Mucosa of descending colon (tissue), 3 donors: ENCODE measurements at regions of chr1 and their contacts with region 1.

Region 1: DNA sequence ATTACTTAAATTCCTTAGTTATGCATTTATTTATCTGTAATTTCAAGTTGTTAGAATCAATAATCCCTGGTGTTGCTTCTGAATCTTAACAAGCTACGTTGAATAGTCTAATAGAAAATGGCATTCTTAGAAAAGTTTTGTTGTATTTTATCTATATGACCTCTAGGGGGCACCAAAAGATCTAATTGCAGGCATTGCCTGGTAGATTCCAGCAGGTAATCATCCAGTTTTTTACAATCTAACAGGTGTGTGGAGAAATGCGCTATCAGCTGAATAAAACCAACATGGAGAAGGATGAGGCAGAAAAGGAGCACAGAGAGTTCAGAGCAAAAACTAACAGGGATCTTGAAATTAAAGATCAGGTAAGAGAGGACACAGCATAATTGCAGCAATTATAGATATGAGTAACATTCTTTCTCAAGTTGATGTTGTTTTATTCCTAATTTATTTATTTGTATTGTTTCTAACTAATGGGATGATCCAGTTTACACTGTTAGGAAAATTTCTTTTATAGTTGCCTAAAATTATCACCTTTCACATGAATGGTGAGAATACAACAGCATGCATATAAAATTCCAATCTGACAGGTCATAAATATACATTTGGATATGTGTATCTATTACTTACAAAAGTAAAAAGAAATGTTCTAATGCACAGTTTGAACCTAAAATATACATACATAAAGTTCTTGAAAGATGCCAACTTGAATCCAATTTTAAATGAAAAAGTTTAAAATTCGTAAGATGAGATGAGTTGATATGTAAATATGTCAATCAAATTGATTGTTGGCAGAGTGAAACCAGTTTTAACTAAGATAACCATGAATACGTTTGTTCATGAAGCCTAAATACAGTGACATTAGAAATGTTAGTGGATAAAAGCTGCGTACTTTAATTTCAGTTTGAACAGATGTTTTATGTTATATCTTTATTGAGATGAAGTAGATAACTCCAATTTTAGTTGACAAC is 88.4 kb downstream of the SDCCAG8 start:
- DNase-seq: peak in 1 of 3 donors; percentile 7
- ATAC-seq: peak; percentile 88
- H3K4me3 ChIP-seq: no peak overlapping the region
- H3K4me1 ChIP-seq: no peaks in the 10 kb centered on the region
- CTCF ChIP-seq: no peak

Region 2: DNA sequence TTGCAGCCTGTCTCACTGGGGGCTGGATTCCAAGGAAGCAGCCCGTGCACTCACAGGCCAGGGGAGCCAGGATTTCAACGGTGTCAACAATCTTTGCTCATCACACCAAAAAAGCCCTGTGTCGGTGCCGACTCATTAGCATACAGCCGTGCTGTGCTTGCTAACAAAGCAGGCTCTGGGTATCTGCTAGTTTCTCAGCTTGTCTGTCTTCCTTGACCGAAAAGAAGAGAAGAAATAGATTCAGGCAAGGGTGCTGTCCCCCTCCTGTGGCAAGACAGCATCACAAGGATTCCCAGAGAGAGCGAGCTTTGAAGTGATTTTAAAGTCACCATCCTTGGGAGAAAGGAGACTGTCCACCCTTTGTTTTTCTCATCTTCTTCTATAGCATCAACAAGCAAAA is 126.2 kb after region 1 on chr1:
- intact Hi-C with region 1: no loop called
- DNase-seq: no peak
- ATAC-seq: no peak
- H3K4me3 ChIP-seq: no peak overlapping the region
- H3K4me1 ChIP-seq: no peaks in the 10 kb centered on the region
- CTCF ChIP-seq: no peak

Region 3: GRCh38 chr1:243482141-243483022 is 138.1 kb after region 1 on chr1:
- intact Hi-C with region 1: no loop called
- DNase-seq: no peak
- ATAC-seq: peak; percentile 18
- H3K4me3 ChIP-seq: no peak overlapping the region
- H3K4me1 ChIP-seq: no peaks in the 10 kb centered on the region
- CTCF ChIP-seq: no peak

Region 4: DNA sequence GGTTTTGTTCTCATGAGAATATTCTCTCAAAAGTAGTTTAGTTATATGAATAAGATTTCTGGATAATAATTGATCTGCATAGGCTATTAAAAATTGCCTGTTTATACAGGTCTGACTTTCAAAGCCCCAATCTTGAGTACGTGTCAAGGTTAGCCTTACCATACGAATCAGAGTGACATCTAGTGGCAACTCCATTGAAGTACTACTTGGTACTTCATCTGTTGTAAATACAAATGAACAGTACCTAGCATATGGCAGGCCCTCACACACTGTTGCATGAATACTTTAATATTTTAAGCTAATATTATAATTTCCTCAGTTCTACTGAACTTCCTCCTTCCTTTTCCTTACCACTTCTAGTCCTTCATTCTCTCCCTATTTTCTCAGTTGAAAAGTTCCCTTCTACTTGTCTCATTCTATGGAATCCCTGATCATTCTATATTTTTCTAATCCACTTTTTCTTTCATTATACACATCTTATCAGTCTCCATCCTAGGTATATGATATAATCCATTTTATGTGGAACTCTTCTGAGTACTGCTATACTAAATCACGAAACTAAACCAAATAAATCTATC is 404.5 kb after region 1 on chr1:
- intact Hi-C with region 1: loop called in 1 of 2 experiments (anchors 10 kb)
- DNase-seq: peak in 1 of 3 donors; percentile 46
- ATAC-seq: peak; percentile 88
- H3K4me3 ChIP-seq: no peak overlapping the region
- H3K4me1 ChIP-seq: no peaks in the 10 kb centered on the region
- CTCF ChIP-seq: peak; percentile 23

Region 5: DNA sequence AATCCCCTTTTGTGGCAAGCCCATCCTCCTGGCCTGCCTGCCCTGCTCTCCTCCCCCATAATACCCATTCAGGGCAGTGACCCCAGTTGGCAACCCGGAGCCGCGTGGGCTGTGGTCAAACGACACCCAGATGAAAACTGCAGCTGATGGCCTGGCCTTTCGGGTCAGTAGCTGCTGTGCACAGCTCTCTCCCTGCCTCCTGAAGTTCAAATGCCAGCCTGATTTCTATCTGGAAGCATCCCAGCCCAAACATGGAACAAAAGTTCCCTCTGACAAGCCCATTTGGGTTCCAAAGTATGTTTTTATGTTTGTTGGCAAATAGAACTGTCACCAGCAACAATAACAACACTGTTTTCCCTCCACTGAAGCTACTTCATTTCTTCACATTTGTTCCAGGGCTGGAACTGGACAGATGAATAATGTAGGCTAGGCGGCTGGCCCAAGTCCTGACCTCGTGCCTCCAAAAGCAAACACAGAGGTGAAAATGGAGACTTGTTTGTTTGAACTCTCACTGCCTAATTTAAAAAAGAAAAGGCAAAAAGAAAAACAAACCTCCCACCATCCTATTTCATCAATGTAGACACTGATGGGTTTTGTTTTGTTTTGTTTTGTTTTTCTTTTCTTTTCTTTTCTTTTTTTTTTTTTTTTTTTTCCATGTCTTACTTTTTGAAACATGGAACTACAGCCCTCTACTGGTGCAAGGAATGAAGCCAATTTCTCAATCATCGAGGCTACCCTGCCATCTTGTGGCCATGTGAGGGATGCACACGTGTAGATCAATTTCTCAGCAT is 928.4 kb after region 1 on chr1:
- intact Hi-C with region 1: loop called (anchors 5 to 10 kb)
- DNase-seq: peak in 2 of 3 donors; percentile 63 to 74
- ATAC-seq: peak; percentile 95
- H3K4me3 ChIP-seq: no peak overlapping the region
- H3K4me1 ChIP-seq: peaks cover 2% of the 10 kb centered on the region
- CTCF ChIP-seq: peak; percentile 76

Region 6: GRCh38 chr1:244311784-244312532 is 967.7 kb after region 1 on chr1:
- intact Hi-C with region 1: no loop called
- DNase-seq: no peak
- ATAC-seq: no peak
- H3K4me3 ChIP-seq: no peak overlapping the region
- H3K4me1 ChIP-seq: no peaks in the 10 kb centered on the region
- CTCF ChIP-seq: no peak

Region 7: DNA sequence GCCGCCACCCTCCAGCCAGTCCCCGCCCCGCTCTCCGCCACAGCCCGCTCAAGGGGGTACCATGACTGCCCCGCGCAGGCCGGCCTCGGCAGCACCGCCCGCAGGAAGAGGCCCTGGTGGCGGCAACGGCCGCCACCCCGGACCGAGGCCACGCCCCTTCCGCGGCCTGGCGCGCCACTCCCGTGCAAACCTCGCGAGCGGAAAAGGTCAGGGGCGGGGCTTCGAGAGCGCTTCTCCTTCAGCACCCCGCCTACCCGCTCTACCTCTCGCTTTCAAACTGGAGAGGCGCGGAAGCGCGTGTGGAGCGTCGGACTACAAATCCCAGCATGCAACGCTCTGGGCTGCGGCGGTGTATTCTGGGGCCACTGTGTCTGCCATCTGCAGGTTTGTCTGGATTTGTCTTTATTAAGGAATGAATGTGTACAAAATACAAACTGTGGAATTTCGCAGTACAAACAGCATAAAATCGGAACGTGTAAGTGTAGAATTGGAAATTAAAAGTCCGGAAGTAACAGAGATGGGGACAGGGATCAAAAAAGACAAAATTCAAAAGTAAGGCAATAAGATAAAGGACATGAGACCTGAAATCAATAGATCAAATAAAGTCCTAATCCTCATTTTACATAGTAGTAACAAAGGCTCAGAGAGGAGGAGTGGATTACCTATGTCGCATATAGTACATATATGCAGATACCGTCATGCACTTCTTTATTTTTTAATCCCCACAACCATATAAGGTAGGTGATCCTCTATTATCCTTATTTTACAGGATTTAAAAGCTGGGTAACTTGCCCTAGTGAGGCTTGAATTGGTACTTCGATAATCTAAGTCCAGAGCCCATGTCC is 1107.9 kb after region 1 on chr1:
- intact Hi-C with region 1: loop called in 1 of 2 experiments (anchors 5 kb)
- DNase-seq: peak; percentile 99 to 100 (median 99)
- ATAC-seq: peak; percentile 97
- H3K4me3 ChIP-seq: peak overlapping the region; percentile 80
- H3K4me1 ChIP-seq: peaks cover 18% of the 10 kb centered on the region
- CTCF ChIP-seq: peak; percentile 42